Mucosa of descending colon (tissue), 3 donors: ENCODE measurements at regions of chr11 and their contacts with region 1.

Region 1: DNA sequence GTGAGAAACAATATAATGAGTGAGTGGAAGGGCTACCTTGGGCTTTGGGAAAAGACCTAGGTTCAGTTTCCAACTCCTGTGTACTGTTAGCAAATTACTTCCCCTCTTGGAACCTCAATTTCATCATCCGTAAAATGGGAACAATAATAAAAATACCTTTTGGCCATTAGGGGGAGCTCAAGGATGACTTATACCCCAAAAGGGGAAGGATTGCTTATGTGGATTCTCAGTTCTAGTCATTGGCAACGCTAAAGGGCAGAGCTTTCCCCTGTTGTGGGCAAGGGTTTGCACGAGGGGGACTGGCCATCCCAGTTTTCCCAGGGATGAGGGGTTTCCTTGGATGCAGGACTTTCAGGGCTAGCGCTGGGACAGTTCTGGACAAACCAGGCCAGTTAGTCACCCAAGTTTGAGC is 3.1 kb upstream of the COMMD9 start:
- DNase-seq: peak in 1 of 3 donors; percentile 40
- ATAC-seq: peak; percentile 40
- H3K4me3 ChIP-seq: no peak overlapping the region
- H3K4me1 ChIP-seq: peaks cover 14% of the 10 kb centered on the region
- CTCF ChIP-seq: peak; percentile 22

Region 2: GRCh38 chr11:36230779-36231699 is 61.3 kb before region 1 on chr11:
- intact Hi-C with region 1: no loop called
- DNase-seq: no peak
- ATAC-seq: no peak
- H3K4me3 ChIP-seq: no peak overlapping the region
- H3K4me1 ChIP-seq: no peaks in the 10 kb centered on the region
- CTCF ChIP-seq: no peak

Region 3: GRCh38 chr11:36425561-36426081 is 133.3 kb after region 1 on chr11:
- intact Hi-C with region 1: no loop called
- DNase-seq: no peak
- ATAC-seq: no peak
- H3K4me3 ChIP-seq: no peak overlapping the region
- H3K4me1 ChIP-seq: peaks cover 9% of the 10 kb centered on the region
- CTCF ChIP-seq: no peak

Region 4: DNA sequence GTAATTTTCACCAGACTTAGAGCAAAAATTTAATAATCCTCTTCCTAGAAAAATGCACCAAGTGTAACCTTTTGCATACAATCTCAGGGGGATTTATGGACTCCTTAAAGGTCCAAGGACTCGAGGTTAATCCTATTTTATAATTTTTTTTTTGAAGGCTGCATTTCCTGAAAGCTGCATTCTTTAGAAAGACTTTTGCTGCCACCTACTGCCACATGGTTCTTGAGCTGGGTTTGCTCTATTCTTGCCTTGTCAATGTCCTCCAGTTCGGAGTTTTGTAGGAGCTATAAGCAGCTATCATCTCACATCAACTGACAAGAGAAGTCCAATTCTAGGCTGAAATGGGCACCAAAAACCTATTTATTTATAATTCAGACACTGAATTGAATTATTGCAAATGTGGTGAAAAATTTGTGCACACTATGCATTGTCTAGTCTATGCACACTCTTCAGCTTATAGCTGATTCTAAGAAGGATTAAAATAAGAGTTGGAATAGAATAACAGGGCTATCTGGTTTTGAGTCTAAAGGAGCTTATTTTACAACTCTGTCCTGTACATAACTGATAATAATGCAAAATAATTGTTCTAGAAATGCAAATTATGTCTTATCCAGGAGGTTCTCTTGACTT is 186.5 kb after region 1 on chr11:
- intact Hi-C with region 1: loop called in 1 of 2 experiments (anchors 10 kb)
- DNase-seq: peak in 1 of 3 donors; percentile 80
- ATAC-seq: peak; percentile 62
- H3K4me3 ChIP-seq: no peak overlapping the region
- H3K4me1 ChIP-seq: peaks cover 3% of the 10 kb centered on the region
- CTCF ChIP-seq: peak; percentile 17